ENCODE measurements at regions of chr11 and their contacts with region 1.

Region 1: DNA sequence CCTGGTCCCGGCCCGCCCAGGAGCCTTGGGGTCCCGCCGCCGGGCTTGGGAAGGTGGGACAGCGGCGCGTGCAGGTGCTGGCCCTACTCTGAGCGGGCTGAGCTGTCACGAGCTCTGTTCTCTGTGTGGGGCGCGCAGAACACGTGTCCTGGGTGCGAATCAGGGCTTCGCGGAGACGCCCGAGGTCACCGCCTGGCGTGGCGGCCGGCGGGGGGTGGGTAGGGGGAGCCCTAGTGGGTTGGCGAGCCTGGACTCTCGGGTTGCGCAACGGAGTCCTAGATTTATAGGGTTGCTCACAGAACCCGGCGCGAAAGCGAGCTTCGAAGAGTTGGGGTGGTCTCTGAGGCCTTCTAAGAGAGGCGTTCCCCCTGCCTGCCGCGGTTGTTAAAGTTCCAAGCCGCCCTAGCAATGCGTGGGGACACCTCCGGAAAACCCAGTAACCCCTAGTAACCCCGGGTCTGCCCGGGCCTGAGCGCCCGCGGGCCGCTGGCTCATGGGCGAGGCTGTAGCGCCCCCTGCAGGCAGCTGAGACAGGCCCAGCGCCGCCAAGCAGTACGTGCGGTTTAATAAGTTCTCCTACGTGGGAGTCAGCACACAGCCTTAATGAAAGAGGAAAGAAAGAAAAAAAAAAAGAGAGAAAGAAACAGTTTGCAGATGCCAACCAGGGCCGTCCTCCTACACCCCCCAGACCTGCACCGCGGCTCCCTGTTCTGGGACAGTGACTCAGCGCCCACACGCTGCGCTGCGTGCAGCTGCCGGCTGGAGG is 2.8 kb downstream of the ADM start:
- DNase-seq: peak; percentile 80 to 87
- ATAC-seq: peak; percentile 64 to 75 (median 70)
- H3K4me3 ChIP-seq: peak overlapping the region; percentile 59 to 89 (median 72)
- H3K27ac ChIP-seq: peak overlapping the region in 9 of 10 donors; percentile 64 to 92 (median 84)
- H3K4me1 ChIP-seq: peaks cover 11 to 71% (median 55%) of the 10 kb centered on the region in 9 donors
- H3K27me3 ChIP-seq: peaks cover 0 to 16% (median 0%) of the 10 kb centered on the region in 7 donors
- CTCF ChIP-seq: peak; percentile 88 to 100 (median 99)

Region 2: GRCh38 chr11:9613118-9613829 is 694.4 kb before region 1 on chr11:
- intact Hi-C with region 1: loop called in 1 of 10 experiments (anchors 10 kb)
- DNase-seq: peak; percentile 94 to 96
- ATAC-seq: peak; percentile 91 to 96 (median 94)
- H3K4me3 ChIP-seq: peak overlapping the region; percentile 0 to 64 (median 56)
- H3K27ac ChIP-seq: peak overlapping the region; percentile 91 to 99 (median 96)
- H3K4me1 ChIP-seq: peaks cover 3 to 34% (median 24%) of the 10 kb centered on the region in 9 donors
- H3K27me3 ChIP-seq: no peaks in the 10 kb centered on the region
- CTCF ChIP-seq: peak; percentile 79 to 99 (median 96)

Region 3: DNA sequence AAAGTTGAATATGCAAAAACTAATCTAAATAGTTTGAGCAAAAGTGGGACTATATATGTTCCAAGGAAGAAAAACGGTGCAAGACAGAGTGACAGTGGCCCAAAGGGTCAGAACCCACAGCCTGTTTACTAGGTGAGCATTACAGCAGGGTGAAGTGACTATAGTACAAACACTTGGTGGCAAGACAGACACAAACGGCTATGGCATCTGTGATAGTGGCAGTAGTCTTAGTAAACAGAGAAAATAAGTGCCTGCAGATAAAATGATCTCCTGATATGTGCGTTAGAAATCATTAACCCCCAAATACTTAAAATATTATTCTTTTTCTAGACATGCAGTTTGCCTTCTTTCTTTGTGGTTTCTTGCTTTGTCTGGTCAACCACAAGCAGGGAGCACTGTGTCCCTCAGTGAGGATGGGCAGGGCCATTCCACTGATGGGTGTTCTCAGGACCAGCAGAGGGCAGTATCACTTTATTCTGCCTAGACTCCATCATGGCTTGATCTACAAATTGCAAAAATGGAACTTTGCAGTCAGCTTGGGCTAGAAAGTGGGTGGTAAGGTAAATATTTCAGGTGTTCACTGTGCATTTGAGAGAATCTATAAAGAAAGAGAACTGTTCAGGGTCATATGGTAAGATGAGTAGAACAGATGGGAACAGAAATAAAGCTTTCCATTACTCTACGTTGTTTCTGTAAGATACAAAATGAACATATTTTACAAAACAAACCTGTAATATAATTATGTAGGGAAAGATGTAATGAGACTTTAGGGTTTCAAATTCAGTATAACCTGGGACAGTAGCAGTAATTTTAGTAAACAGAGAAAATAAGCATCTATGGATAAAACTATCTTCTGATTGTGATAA is 445.5 kb before region 1 on chr11:
- intact Hi-C with region 1: loop called in 6 of 10 experiments (anchors 1 to 10 kb)
- DNase-seq: peak; percentile 13 to 39
- ATAC-seq: peak in 7 of 8 donors; percentile 77 to 90 (median 82)
- H3K4me3 ChIP-seq: no peak overlapping the region
- H3K27ac ChIP-seq: no peak overlapping the region
- H3K4me1 ChIP-seq: peaks cover 0 to 19% (median 13%) of the 10 kb centered on the region in 9 donors
- H3K27me3 ChIP-seq: no peaks in the 10 kb centered on the region
- CTCF ChIP-seq: peak; percentile 53 to 85 (median 74)

Region 4: DNA sequence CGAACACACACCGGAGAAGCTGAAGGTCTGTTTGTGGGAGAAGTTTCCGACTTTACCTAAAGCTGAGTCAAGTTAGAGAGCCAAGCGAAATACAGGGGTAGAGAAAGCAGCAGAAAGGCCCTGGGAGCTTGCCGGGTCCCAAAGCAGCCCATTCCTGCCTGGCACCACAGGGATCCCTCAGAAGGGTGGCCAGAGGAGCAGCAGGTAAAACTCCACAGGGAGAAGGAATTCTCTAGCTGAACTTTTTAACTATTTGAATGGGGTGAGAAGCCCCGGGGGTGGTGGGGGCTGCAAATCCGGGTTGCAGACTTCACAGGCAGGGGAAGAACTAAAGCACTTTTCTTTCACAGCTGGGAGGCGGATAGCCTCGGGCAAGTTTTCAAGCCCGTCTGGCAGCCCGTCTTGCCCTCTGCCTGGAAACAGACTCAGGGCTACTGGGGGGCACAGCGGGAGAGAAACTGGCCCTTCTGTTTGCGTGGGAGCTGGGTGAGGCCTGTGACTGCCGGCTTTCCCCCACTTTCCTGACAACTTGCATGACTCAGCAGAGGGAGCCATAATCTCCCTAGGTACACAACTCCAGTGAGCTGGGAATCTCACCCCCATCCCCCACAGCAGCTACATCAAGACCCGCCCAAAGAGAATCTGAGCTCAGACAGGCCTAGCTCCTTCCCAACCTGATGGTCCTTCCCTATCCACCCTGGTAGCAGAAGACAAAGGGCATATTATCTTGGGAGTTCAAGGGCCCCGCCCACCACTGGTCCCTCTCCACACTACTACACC is 324.6 kb before region 1 on chr11:
- intact Hi-C with region 1: loop called in 4 of 10 experiments (anchors 5 to 10 kb)
- DNase-seq: no peak
- ATAC-seq: no peak
- H3K4me3 ChIP-seq: no peak overlapping the region
- H3K27ac ChIP-seq: no peak overlapping the region
- H3K4me1 ChIP-seq: peaks cover 0 to 8% (median 3%) of the 10 kb centered on the region in 9 donors
- H3K27me3 ChIP-seq: no peaks in the 10 kb centered on the region
- CTCF ChIP-seq: no peak

Region 5: GRCh38 chr11:10108915-10109680 is 198.5 kb before region 1 on chr11:
- intact Hi-C with region 1: loop called in 3 of 10 experiments (anchors 10 kb)
- DNase-seq: peak in 1 of 2 donors; percentile 41
- ATAC-seq: peak in 7 of 8 donors; percentile 65 to 95 (median 85)
- H3K4me3 ChIP-seq: no peak overlapping the region
- H3K27ac ChIP-seq: peak overlapping the region in 7 of 10 donors; percentile 0 to 66 (median 17)
- H3K4me1 ChIP-seq: peaks cover 2 to 41% (median 22%) of the 10 kb centered on the region in 9 donors
- H3K27me3 ChIP-seq: no peaks in the 10 kb centered on the region
- CTCF ChIP-seq: no peak

Region 6: GRCh38 chr11:10208131-10208575 is 99.5 kb before region 1 on chr11:
- intact Hi-C with region 1: loop called in 9 of 10 experiments (anchors 2 to 5 kb)
- DNase-seq: no peak
- ATAC-seq: peak in 6 of 8 donors; percentile 42 to 63 (median 54)
- H3K4me3 ChIP-seq: no peak overlapping the region
- H3K27ac ChIP-seq: no peak overlapping the region
- H3K4me1 ChIP-seq: peaks cover 0 to 26% (median 14%) of the 10 kb centered on the region in 9 donors
- H3K27me3 ChIP-seq: no peaks in the 10 kb centered on the region
- CTCF ChIP-seq: peak; percentile 62 to 82 (median 74)

Region 7: DNA sequence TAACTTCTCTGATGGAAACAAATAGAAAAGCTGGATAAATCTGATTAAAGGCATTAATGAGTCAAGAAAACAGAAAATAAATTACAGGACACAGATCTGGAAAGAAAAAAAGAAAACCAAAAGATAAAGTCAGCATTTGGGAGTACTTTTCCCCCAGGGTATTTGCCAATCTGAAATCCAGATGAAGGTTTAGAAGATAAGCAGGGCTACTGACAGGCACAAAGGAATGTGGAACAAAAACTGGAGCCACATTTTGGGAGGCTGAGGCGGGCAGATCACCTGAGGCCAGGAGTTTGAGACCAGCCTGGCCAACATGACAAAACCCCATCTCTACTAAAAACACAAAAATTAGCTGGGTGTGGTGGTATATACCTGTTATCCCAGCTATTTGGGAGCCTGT is 70.8 kb before region 1 on chr11:
- intact Hi-C with region 1: no loop called
- DNase-seq: no peak
- ATAC-seq: no peak
- H3K4me3 ChIP-seq: no peak overlapping the region
- H3K27ac ChIP-seq: no peak overlapping the region
- H3K4me1 ChIP-seq: peaks cover 0 to 11% (median 3%) of the 10 kb centered on the region in 9 donors
- H3K27me3 ChIP-seq: no peaks in the 10 kb centered on the region
- CTCF ChIP-seq: no peak

Measured in heart right ventricle (tissue), 16 donors.